Dorsolateral prefrontal cortex (tissue), 120 donors: ENCODE measurements at regions of chr13 and their contacts with region 1.

Region 1: GRCh38 chr13:31742097-31742734 is 2.9 kb downstream of the RXFP2 start:
- DNase-seq: peak; percentile 26 to 72 (median 54)
- H3K4me3 ChIP-seq: peak overlapping the region in 11 of 59 donors; percentile 17 to 46 (median 23)
- H3K27ac ChIP-seq: no peak overlapping the region
- H3K27me3 ChIP-seq: peaks cover 0 to 18% (median 0%) of the 10 kb centered on the region in 45 donors
- CTCF ChIP-seq: peak; percentile 91 to 100 (median 97)

Region 2: DNA sequence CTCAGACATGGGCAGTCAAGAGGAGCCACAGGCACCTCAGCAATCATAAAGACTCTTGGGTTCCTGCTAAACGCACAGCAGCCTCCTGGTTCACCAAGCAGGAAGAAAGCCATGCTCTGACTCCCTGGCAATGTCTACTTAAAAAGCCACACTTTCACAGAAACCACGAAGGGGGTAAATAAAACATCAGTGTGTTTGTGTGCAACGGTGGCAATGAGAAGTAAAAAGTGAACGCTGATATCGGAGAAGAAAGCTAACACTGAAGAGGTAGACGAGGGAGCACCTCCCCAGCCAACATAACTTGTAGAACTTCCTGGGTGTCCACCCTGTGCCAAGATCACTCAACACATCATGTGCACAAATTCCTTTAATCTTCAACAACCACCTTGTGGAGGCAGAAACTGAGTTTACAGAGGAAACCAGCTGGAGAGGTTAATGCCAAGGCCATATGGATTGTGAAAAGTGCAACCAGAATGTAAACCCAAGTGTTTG is 610.7 kb before region 1 on chr13:
- intact Hi-C with region 1: no loop called
- DNase-seq: no peak
- H3K4me3 ChIP-seq: no peak overlapping the region
- H3K27ac ChIP-seq: no peak overlapping the region
- H3K27me3 ChIP-seq: peaks cover 0 to 3% (median 0%) of the 10 kb centered on the region in 45 donors
- CTCF ChIP-seq: no peak

Region 3: DNA sequence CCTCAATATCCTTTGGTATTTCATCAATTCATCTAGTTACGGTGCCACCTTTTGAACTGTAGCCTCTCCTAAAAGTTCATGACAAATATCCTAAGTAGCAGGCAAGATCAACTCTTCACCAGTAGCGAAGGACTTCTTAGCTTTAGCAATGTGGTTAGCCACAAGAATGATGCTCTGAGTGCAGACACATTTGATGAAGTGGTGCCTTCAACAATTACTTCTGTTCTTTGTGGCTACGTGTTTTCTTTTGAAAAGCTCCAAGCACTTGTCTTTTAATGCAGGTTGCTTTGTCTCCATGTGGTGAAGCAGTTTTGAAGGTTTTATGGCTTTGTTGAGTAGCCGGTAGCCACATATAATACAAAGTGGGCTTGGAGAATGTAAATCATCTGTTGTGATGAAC is 347.7 kb before region 1 on chr13:
- intact Hi-C with region 1: no loop called
- DNase-seq: no peak
- H3K4me3 ChIP-seq: no peak overlapping the region
- H3K27ac ChIP-seq: no peak overlapping the region
- H3K27me3 ChIP-seq: no peaks in the 10 kb centered on the region
- CTCF ChIP-seq: no peak

Region 4: GRCh38 chr13:31431722-31432137 is 310.5 kb before region 1 on chr13:
- intact Hi-C with region 1: loop called (anchors 5 to 10 kb)
- DNase-seq: peak in 7 of 10 donors; percentile 15 to 61 (median 42)
- H3K4me3 ChIP-seq: no peak overlapping the region
- H3K27ac ChIP-seq: no peak overlapping the region
- H3K27me3 ChIP-seq: peaks cover 0 to 4% (median 0%) of the 10 kb centered on the region in 45 donors
- CTCF ChIP-seq: peak; percentile 54 to 89 (median 80)

Region 5: DNA sequence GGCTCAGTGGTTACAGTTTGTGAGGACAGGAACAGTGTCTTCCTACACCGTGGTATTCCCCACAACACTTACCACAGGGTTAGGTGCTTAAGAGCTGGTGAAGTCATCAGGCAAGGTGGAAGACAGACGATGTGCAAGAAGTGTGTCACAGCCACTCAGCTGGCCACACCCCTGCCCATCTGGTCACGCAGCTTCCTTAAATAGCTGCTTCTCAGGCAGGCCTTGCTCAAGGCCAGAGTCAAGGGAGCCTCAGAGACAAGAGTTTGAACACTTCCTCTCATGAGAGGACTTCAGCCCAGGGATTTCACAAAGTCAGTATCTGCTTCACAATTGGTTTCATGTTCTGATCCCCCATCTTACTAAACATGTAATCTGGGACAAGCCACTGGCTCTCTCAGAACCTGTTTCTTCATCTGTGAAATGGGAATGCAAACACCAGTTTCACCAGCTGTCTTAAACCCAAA is 209.0 kb after region 1 on chr13:
- intact Hi-C with region 1: no loop called
- DNase-seq: peak in 3 of 10 donors; percentile 11 to 61 (median 24)
- H3K4me3 ChIP-seq: no peak overlapping the region
- H3K27ac ChIP-seq: peak overlapping the region in 1 of 59 donors; percentile 32
- H3K27me3 ChIP-seq: no peaks in the 10 kb centered on the region
- CTCF ChIP-seq: no peak

Region 6: DNA sequence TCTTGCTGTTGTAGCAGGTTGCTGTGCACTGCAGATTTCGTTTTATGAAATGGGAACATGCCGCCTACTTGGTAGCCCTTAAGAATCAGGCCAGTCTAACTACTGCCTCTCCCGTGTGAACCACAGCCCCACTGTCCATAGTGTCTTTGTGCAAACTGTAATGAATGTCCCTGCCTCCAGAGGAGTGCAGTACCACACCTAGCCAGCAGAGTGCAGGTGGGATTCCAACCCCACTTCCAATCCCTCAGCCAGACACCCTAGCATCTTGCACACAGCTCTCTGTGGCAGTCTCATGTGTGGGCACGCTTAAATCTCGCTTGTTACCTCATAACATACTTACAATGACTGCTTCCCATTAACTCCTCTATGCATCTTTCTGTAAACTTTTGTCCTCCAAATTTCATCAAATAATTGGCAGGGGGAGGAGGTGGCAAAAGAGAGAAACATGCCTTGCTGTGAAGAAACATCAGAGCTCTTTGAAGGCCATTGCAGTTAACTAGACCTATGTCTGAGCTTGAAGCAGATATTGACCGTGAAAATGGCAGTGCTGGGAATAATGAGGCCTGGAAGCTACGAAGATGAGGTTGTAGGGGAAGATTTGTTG is 525.7 kb after region 1 on chr13:
- intact Hi-C with region 1: no loop called
- DNase-seq: no peak
- H3K4me3 ChIP-seq: no peak overlapping the region
- H3K27ac ChIP-seq: no peak overlapping the region
- H3K27me3 ChIP-seq: no peaks in the 10 kb centered on the region
- CTCF ChIP-seq: peak in 26 of 56 donors; percentile 10 to 46 (median 28)